A549 (cell line): ENCODE measurements at regions of chr18 and their contacts with region 1.

Region 1: DNA sequence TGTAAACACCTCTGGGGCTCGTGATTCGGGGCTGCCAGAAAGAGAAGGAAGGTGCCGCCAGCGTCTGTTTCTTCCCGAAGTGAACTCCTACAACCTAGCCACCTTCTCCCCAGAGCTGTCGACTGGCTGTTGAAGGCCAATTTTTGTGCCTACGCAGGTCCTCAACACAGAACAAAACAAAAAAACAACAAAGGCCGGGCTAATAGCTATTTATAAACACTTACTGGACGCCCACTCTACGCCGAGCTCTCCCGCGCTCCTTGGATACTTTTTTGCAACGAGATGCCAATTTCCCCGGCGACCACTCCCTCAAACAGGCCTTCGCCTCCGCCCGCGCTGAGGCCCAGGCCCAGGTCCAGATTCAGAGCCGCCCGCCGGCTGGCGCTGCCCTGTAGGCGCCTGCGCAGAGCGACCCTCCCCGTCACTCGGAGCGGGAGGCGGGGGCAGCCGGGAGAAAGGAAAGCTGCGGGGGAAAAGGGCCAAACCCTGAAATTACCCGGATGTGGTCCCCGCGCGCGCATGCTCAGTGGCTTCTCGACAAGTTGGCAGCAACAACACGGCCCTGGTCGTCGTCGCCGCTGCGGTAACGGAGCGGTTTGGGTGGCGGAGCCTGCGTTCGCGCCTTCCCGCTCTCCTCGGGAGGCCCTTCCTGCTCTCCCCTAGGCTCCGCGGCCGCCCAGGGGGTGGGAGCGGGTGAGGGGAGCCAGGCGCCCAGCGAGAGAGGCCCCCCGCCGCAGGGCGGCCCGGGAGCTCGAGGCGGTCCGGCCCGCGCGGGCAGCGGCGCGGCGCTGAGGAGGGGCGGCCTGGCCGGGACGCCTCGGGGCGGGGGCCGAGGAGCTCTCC is at the start of gene SMAD4:
- DNase-seq: peak; percentile 77 to 94
- ATAC-seq: peak; percentile 92 to 95
- H3K4me3 ChIP-seq: peak within 1 kb of the TSS; percentile 96
- H3K27ac ChIP-seq: peak within 1 kb of the TSS; percentile 99
- H3K4me1 ChIP-seq: peaks cover 13% of the 10 kb centered on the region; the same call in 1 of the 3 replicates
- CTCF ChIP-seq: no peak
- EP300 ChIP-seq: no peak
- POLR2A ChIP-seq: peak; percentile 69
- RAD21 ChIP-seq: no peak
- polyA plus RNA-seq, gene SMAD4: 90.0 and 107 TPM in 2 replicates

Region 2: GRCh38 chr18:50847192-50847591 is 182.7 kb before region 1 on chr18:
- CTCF ChIA-PET with region 1: no interaction called
- POLR2A ChIA-PET with region 1: interaction called, 14 read pairs
- DNase-seq: peak in 1 of 2 experiments; percentile 33
- ATAC-seq: peak; percentile 74 to 79
- H3K4me3 ChIP-seq: no peak overlapping the region
- H3K27ac ChIP-seq: peak overlapping the region; percentile 23 to 67; a peak in 3 of 6 replicates
- H3K4me1 ChIP-seq: peaks cover 30% of the 10 kb centered on the region
- CTCF ChIP-seq: no peak
- EP300 ChIP-seq: no peak
- POLR2A ChIP-seq: no peak
- RAD21 ChIP-seq: no peak

Region 3: DNA sequence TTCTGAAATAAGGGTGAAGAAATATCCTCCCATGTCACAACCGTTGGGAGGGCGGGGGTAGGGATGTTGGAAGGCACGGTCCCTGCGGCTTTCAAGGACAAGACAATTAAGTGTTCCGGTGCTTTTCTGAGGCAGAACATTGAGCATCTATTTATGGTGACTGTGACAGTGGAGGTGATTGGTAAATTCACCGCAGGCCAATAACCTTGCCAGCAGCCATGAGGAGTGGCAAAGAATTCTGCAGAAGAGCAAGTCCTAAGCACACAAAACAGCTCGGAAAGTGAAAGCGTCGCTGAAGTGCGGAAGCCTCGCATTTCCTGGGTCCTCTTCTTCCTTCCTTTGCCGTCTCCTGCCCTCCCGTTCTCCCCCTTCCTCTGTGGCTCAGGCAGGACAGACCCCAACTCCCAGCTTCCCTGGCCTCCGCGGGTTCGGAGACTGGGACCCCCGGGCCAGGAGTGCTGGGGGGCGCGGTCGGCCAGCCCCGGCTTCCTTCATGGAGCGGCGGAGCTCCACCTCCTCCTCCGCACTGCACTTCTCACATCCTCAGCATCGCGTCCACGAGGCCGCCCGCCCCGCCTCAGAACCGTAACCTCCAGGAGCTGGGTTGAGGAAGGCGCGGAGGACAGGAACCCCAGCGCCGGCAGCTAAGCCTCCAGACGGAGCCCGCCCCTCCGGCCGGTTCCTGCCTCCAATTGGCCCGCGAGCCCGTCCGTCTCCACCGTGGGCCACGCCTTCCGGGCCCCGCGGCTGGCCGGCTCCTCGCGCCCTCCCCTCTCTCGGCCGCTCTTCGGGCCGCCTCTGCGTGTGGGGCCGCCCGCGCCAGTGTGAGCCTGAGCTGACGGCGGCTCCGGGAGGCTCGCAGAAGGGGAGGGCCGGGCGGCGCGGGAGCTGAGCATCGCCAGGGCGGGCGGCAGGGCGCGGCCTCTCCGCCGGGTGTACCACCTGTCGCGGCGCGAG is 151.3 kb before region 1 on chr18 and contains the start of gene ME2:
- CTCF ChIA-PET with region 1: no interaction called
- POLR2A ChIA-PET with region 1: interaction called, 11 read pairs
- DNase-seq: peak; percentile 74 to 90
- ATAC-seq: peak; percentile 96 to 99
- H3K4me3 ChIP-seq: peak within 1 kb of the TSS; percentile 91
- H3K27ac ChIP-seq: peak within 1 kb of the TSS; percentile 95 to 100
- H3K4me1 ChIP-seq: peaks cover 13% of the 10 kb centered on the region
- CTCF ChIP-seq: no peak
- EP300 ChIP-seq: no peak
- POLR2A ChIP-seq: peak; percentile 54
- RAD21 ChIP-seq: no peak
- polyA plus RNA-seq, gene ME2: 72.2 and 88.0 TPM in 2 replicates

Region 4: DNA sequence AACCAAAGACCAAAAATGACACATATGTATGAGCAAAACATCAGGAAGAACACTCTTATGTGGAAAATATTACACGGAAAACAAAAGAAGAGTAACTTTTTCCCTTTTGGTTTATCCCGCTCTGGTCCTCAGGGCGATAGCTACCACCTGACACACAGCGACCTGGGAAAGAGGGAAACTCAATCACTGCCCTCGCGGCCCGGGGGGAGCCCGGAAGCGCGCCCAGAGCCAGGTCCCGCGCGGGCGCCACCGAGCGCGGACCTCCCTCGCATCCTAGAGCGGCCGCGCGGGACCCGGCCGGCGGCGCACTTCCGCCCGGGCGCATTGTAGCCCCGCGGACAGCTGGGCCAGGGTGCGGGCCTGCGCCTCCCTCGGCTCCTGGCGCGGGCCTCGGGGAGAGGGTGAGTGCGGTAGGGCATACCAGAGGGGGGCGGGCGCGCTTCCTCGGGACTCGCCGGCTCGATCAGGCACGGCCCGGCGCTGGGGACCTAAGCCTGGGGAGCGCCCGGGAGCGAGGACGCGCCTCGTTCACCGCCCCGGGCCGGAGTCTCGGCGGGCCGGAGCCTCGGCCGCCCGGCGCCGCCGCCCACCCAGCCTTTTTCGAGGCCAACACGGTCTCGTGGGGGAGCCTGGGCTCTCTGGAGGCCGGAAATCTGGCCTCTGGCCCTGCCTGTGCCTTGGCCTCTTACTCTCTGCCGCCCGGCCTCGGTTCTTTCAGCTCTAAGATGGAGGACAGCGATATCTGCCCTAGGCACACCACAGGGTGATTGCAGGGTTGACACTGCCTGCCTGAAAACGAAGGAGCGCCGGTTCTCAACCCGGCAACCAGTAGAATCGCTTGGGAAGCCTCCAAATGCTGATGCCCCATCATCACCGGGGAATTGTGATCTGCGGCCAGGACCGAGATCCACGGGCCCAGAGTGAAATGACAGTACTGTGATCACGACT is 61.9 kb before region 1 on chr18 and contains the start of gene ELAC1:
- CTCF ChIA-PET with region 1: no interaction called
- POLR2A ChIA-PET with region 1: interaction called, 17 read pairs
- DNase-seq: peak; percentile 50 to 82
- ATAC-seq: peak; percentile 98 to 99
- H3K4me3 ChIP-seq: peak within 1 kb of the TSS; percentile 64
- H3K27ac ChIP-seq: peak within 1 kb of the TSS; percentile 88 to 100
- H3K4me1 ChIP-seq: peaks cover 21% of the 10 kb centered on the region
- CTCF ChIP-seq: no peak
- EP300 ChIP-seq: no peak
- POLR2A ChIP-seq: peak; percentile 77
- RAD21 ChIP-seq: no peak
- polyA plus RNA-seq, gene ELAC1: 6.0 and 6.6 TPM in 2 replicates